Activated naive CD4-positive, alpha-beta T cell treated with anti-CD3 and anti-CD28 coated beads for 36 hours (primary cell): ENCODE measurements at regions of chr4 and their contacts with region 1.

Region 1: GRCh38 chr4:119238068-119238722 is 25.7 kb downstream of the USP53 start:
- DNase-seq: peak; percentile 60
- H3K4me3 Mint-ChIP-seq: no peak overlapping the region
- H3K27ac Mint-ChIP-seq: peak overlapping the region; percentile 72
- H3K4me1 Mint-ChIP-seq: peaks cover 38% of the 10 kb centered on the region
- H3K27me3 Mint-ChIP-seq: no peaks in the 10 kb centered on the region

Region 2: DNA sequence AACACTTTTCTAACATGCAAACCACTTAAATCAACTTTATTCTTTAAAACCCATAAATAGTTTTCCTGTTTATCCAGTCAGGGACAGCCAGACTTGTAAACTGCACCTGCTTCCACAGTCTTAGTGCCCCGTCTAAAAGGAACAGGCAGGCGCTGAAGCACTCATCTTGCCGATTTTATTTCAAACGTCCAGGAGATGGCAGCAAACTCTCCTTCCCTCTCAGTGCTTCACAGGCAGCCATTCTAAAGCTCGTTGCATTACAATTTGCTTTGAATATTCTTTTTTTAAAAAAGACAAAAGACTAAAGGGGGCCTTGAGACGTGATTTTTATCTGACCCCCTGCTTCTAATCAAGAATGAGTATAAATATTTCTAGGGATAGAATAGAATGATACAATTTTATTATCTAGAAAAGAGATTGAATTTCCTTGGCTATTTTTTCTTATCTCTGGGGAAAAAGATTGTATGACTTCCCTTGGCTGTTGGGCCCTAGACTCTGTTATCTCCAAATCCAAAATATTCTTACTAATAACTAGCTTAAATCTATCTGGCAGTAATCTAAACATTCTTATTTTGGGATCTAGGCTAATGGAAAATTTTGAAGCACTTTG is 196.1 kb before region 1 on chr4:
- CTCF ChIA-PET with region 1: interaction called, 3 read pairs
- intact Hi-C with region 1: loop called (anchors 1 kb)
- DNase-seq: peak; percentile 75
- H3K4me3 Mint-ChIP-seq: no peak overlapping the region
- H3K27ac Mint-ChIP-seq: no peak overlapping the region
- H3K4me1 Mint-ChIP-seq: peaks cover 13% of the 10 kb centered on the region
- H3K27me3 Mint-ChIP-seq: no peaks in the 10 kb centered on the region

Region 3: GRCh38 chr4:119172223-119172622 is 66.0 kb before region 1 on chr4:
- CTCF ChIA-PET with region 1: no interaction called
- intact Hi-C with region 1: no loop called
- DNase-seq: peak; percentile 12
- H3K4me3 Mint-ChIP-seq: no peak overlapping the region
- H3K27ac Mint-ChIP-seq: no peak overlapping the region
- H3K4me1 Mint-ChIP-seq: no peaks in the 10 kb centered on the region
- H3K27me3 Mint-ChIP-seq: no peaks in the 10 kb centered on the region

Region 4: DNA sequence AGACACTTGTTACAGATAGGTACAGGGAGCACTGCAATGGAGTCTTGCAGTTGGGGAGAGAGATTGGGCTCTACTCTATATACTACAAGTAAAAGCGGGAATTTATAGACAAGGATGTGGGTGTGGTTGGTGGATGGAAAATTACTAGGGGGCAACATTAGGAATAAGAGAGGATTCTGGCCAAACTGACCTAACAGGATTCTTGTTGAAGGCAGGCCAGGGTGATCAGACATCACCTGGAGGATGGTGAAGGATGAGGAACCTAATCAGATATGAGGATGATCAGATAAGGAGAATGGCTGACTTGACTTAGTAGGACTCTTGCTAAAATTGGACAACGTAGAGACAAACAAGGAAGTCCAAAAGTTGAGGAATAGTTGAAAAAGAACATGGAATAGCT is 17.4 kb before region 1 on chr4:
- CTCF ChIA-PET with region 1: no interaction called
- intact Hi-C with region 1: loop called (anchors 1 kb)
- DNase-seq: no peak
- H3K4me3 Mint-ChIP-seq: no peak overlapping the region
- H3K27ac Mint-ChIP-seq: no peak overlapping the region
- H3K4me1 Mint-ChIP-seq: peaks cover 13% of the 10 kb centered on the region
- H3K27me3 Mint-ChIP-seq: no peaks in the 10 kb centered on the region

Region 5: GRCh38 chr4:119261986-119262385 is 23.8 kb after region 1 on chr4:
- CTCF ChIA-PET with region 1: interaction called, 5 read pairs
- intact Hi-C with region 1: loop called (anchors 1 kb)
- DNase-seq: no peak
- H3K4me3 Mint-ChIP-seq: no peak overlapping the region
- H3K27ac Mint-ChIP-seq: no peak overlapping the region
- H3K4me1 Mint-ChIP-seq: peaks cover 17% of the 10 kb centered on the region
- H3K27me3 Mint-ChIP-seq: no peaks in the 10 kb centered on the region

Region 6: DNA sequence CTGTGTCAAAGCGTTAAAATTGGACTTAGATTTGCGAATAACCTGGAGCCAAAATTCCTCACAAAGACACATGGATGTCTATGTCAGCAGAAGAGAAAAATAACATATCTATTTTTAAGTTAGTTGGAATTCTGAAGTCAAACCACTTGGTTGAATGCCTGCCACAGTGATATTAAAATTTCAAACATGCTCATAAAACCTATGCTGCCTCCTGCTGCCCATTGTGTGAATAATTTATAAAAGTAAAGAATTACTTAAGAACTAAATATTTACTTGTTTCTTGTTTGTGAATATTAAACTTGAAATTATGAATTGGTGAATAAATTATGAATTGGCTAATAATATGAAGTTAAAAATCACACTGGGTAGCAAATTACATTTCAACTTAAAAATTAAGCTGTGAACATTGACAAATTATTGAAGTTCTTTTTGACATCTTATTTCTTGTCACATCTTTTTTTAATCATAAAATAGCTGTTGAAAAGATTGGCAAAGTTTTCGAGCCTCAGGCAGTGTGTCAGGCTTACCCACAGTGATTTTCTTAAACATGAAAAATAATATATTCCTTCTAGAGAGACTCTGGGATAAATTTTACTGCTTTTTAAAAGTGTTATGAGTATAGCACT is 48.3 kb after region 1 on chr4:
- CTCF ChIA-PET with region 1: interaction called, 3 read pairs
- intact Hi-C with region 1: loop called (anchors 2 kb)
- DNase-seq: peak; percentile 52
- H3K4me3 Mint-ChIP-seq: no peak overlapping the region
- H3K27ac Mint-ChIP-seq: no peak overlapping the region
- H3K4me1 Mint-ChIP-seq: peaks cover 11% of the 10 kb centered on the region
- H3K27me3 Mint-ChIP-seq: no peaks in the 10 kb centered on the region

Region 7: GRCh38 chr4:119300101-119300978 is 62.1 kb after region 1 on chr4:
- CTCF ChIA-PET with region 1: interaction called, 3 read pairs
- intact Hi-C with region 1: loop called (anchors 1 kb)
- DNase-seq: peak; percentile 92
- H3K4me3 Mint-ChIP-seq: peak overlapping the region; percentile 97
- H3K27ac Mint-ChIP-seq: peak overlapping the region; percentile 95
- H3K4me1 Mint-ChIP-seq: peaks cover 25% of the 10 kb centered on the region
- H3K27me3 Mint-ChIP-seq: no peaks in the 10 kb centered on the region

Region 8: DNA sequence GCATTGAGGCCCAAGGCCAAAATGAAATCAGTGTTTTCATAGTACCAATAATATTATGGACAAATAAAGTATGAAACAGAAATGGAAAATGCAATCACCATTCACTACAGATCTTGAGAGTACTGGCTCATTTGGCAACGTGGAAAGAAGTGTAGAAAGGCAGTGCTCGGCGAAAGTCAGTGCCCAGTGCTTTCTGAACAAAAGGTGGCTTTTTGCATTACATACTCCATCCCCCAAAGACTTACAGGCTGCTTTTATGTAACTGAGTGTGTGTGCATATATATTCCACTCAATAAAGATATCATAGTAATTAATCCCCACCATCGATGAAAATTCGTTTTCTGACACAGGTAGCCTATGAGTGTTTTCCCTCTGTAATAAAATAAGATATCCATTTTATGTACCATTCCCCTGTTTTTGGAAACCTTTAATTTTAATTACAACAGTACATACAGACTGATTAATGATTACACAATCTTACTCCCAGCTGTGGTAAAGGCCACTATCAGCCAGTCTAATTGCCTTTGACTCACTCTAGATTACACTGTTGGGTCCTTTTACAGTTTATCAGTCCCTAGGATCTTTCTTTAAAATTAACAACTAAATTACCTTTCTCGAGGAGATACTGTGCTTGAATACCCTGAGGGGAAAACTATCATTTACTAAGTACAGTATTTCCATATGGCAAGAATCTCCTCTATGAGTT is 762.5 kb after region 1 on chr4:
- CTCF ChIA-PET with region 1: no interaction called
- intact Hi-C with region 1: no loop called
- DNase-seq: no peak
- H3K4me3 Mint-ChIP-seq: no peak overlapping the region
- H3K27ac Mint-ChIP-seq: no peak overlapping the region
- H3K4me1 Mint-ChIP-seq: no peaks in the 10 kb centered on the region
- H3K27me3 Mint-ChIP-seq: peaks cover 15% of the 10 kb centered on the region